ENCODE measurements at regions of chrX and their contacts with region 1.

Region 1: GRCh38 chrX:120446498-120446897 is 22.6 kb downstream of the LAMP2 start:
- DNase-seq: no peak
- ATAC-seq: peak in 1 of 2 donors; percentile 50

Region 2: GRCh38 chrX:120244735-120245498 is 201.6 kb before region 1 on chrX:
- intact Hi-C with region 1: loop called in 1 of 2 experiments (anchors 10 kb)
- DNase-seq: peak; percentile 65
- ATAC-seq: peak; percentile 90 to 91

Region 3: GRCh38 chrX:120504594-120504993 is 58.1 kb after region 1 on chrX:
- intact Hi-C with region 1: no loop called
- DNase-seq: no peak
- ATAC-seq: no peak

Measured in left cardiac atrium (tissue), 4 donors.